ENCODE measurements at regions of chr11 and their contacts with region 1.

Region 1: DNA sequence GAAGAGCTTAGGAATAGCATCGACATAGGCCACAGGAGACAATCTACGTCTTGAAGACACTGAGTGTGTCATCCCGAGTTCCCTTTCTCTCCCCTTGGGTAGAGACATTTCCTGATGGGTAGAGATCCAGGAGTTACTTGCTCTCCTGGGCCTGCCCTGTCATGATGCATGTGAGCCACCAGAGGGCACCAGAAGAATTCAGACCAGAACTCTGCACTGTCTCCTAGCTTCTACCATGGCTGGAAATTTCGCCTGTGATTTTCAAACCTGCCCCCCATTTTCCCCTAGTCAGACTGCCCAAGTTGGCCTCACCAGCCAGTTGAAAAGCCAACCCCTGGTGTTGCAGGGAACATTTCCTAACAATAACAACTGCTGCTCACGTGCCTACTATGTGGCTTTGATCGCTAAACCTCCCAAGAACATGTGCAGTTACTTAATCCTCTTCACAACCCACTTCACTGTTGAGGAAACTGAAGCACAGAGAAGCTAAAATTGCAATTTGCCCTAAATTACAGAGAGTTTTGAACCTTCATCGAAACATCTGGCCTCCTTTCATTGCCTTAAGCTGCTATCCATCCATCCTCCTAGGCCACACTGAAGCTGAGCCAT is 47.2 kb downstream of the C11orf58 start:
- DNase-seq: peak; percentile 64
- H3K4me3 Mint-ChIP-seq: no peak overlapping the region
- H3K27ac Mint-ChIP-seq: no peak overlapping the region
- H3K4me1 Mint-ChIP-seq: no peaks in the 10 kb centered on the region
- H3K27me3 Mint-ChIP-seq: no peaks in the 10 kb centered on the region

Region 2: DNA sequence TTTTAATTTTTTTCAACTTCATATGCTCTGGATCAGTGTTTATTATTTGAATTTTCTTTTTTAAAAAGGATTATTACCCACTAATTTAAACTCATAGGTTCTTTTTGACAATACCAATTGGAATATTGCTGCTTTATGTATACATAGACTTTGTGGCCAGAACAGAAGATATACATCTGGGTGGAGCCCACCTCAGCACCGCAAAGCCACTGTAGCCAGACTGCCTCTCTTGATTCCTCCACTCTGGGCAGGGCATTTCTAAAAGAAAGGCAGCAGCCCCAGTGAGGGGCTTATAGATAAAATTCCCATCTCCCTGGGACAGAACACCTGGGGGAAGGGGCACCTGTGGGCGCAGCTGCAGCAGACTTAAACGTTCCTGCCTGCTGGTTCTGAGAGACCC is 57.8 kb before region 1 on chr11:
- CTCF ChIA-PET with region 1: no interaction called
- POLR2A ChIA-PET with region 1: no interaction called
- DNase-seq: no peak
- H3K4me3 Mint-ChIP-seq: no peak overlapping the region
- H3K27ac Mint-ChIP-seq: no peak overlapping the region
- H3K4me1 Mint-ChIP-seq: no peaks in the 10 kb centered on the region
- H3K27me3 Mint-ChIP-seq: peaks cover 25% of the 10 kb centered on the region

Region 3: DNA sequence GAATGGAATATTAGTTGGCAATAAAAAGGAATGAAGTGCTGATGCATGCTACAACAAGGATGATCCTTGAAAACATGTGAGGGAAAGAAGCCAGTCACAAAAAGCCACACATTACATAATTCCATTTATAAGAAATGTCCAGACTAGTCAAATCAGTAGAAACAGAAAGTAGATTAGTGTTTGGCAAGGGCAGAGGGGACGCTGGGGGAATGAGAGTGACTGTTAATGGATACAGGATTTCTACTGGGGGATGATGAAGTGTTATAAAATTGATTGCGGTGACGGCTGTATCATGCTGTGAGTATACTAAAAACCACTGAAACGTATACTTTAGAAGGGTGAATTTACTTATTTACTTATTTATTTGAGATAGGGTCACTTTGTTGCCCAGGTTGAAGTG is 10.7 kb after region 1 on chr11:
- CTCF ChIA-PET with region 1: interaction called, 10 read pairs
- POLR2A ChIA-PET with region 1: no interaction called
- DNase-seq: no peak
- H3K4me3 Mint-ChIP-seq: no peak overlapping the region
- H3K27ac Mint-ChIP-seq: no peak overlapping the region
- H3K4me1 Mint-ChIP-seq: peaks cover 23% of the 10 kb centered on the region
- H3K27me3 Mint-ChIP-seq: no peaks in the 10 kb centered on the region